ENCODE measurements at regions of chr1 and their contacts with region 1.

Region 1: DNA sequence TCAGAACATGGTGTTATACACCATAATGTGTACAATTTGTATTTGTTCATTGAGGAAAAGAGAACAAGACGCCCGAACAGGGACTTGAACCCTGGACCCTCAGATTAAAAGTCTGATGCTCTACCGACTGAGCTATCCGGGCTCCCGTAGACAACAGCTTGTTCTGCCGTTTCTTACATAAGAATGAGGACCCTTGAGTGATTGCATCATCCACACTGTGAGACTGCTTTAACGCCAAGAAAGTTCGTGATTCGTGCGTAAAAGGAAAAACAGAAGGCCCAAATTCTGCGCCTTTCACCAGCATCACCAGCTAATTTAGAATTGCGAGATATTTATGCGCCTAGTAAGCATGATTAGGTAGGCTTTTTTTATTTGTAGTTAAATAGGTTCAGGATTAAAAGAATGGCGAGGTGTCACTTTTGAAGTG is 9.2 kb upstream of the MDM4 start:
- DNase-seq: peak; percentile 100
- ATAC-seq: peak; percentile 75
- H3K4me3 ChIP-seq: peak overlapping the region; percentile 76
- H3K27ac ChIP-seq: peak overlapping the region; percentile 59
- H3K4me1 ChIP-seq: peaks cover 23% of the 10 kb centered on the region
- H3K27me3 ChIP-seq: no peaks in the 10 kb centered on the region
- CTCF ChIP-seq: no peak

Region 2: DNA sequence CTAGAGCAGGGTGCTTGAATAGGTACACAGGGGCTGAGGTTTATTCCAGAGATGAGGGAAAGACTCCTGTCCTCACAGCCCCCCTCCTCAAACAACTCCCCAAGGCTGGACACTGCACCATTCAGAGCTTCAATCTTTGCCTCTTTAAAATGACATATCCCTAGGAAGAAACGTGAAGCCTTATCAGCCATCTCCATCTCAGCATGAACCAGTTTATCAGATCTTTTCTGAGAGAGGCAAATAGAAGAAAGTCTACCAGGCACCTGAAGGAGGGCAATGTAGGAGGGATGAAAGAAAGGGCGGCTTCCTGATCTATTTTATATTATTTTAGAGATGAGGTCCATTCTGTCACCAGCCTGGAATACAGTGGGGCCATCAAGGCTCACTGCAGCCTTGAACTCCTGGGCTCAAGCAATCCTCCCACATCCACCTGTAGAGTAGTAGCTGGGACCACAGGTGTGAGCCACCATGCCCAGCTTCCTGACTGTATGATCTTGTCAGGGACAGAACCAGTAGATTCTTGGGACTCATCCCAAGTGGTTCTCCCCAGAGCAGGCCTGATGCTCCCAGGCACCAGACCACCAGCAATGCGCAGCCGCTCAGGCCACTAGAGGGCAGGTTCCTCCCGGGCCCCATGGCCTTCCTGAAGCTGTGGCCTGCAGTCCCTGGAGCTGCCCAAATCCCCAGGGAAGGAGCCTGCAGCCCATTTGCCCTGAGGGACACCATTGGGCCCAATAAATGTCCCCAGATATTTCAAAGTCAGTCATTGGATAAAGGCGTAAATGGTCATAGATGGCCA is 248.8 kb before region 1 on chr1:
- CTCF ChIA-PET with region 1: no interaction called
- POLR2A ChIA-PET with region 1: no interaction called
- intact Hi-C with region 1: loop called (anchors 5 kb)
- DNase-seq: peak; percentile 78
- ATAC-seq: peak; percentile 97
- H3K4me3 ChIP-seq: no peak overlapping the region
- H3K27ac ChIP-seq: no peak overlapping the region
- H3K4me1 ChIP-seq: no peaks in the 10 kb centered on the region
- H3K27me3 ChIP-seq: no peaks in the 10 kb centered on the region
- CTCF ChIP-seq: peak; percentile 96

Region 3: DNA sequence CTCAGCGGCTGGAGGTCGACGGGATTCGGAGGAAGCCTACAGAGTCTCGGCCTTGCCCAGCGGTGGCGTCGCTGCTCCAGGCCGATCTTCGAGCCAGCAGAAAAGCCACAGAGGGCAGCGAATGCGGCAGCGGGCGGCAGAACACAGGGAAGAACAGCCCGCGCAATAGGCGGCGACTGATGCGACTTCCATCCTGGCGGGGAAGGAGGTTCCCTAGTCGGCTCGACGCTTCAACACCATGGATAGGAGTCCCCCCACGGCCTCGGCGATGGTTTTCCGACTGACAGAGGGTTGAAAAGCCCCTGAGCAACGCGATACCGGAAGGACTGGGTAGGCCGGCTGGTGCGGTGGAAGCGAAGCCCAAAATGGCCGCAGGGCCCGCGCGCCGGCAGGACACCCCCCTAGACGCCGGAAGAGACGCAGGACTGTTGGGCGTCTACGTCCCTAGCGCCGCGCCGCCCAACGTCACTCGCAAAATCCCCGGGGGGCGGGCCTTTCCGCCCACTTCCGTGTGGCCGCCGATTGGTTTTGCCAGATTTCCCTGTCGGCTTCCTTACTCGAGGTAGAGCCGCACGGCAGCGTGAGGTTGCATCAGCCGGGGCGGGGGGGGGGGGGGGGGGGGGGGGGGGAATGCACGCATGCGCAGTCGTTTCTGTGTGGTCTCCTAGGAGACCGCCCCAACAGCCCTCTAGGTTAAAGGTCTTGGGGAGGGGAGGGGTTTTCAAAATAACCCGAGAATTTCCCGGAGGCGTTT is 95.3 kb before region 1 on chr1 and contains the start of gene PPP1R15B:
- CTCF ChIA-PET with region 1: interaction called, 6 read pairs
- POLR2A ChIA-PET with region 1: interaction called, 6 read pairs
- intact Hi-C with region 1: loop called (anchors 5 kb)
- DNase-seq: peak; percentile 100
- ATAC-seq: peak; percentile 82
- H3K4me3 ChIP-seq: peak within 1 kb of the TSS; percentile 80
- H3K27ac ChIP-seq: peak within 1 kb of the TSS; percentile 86
- H3K4me1 ChIP-seq: peaks cover 23% of the 10 kb centered on the region
- H3K27me3 ChIP-seq: no peaks in the 10 kb centered on the region
- CTCF ChIP-seq: no peak
- total RNA-seq, gene PPP1R15B: 50.7 and 57.5 TPM in 2 replicates

Region 4: GRCh38 chr1:204438628-204439027 is 68.3 kb before region 1 on chr1:
- CTCF ChIA-PET with region 1: interaction called, 8 read pairs
- POLR2A ChIA-PET with region 1: no interaction called
- intact Hi-C with region 1: loop called (anchors 2 kb)
- DNase-seq: peak; percentile 99
- ATAC-seq: peak; percentile 96
- H3K4me3 ChIP-seq: peak overlapping the region; percentile 35; the same call in 1 of the 2 replicates
- H3K27ac ChIP-seq: peak overlapping the region; percentile 73
- H3K4me1 ChIP-seq: peaks cover 43% of the 10 kb centered on the region
- H3K27me3 ChIP-seq: no peaks in the 10 kb centered on the region
- CTCF ChIP-seq: no peak

Region 5: DNA sequence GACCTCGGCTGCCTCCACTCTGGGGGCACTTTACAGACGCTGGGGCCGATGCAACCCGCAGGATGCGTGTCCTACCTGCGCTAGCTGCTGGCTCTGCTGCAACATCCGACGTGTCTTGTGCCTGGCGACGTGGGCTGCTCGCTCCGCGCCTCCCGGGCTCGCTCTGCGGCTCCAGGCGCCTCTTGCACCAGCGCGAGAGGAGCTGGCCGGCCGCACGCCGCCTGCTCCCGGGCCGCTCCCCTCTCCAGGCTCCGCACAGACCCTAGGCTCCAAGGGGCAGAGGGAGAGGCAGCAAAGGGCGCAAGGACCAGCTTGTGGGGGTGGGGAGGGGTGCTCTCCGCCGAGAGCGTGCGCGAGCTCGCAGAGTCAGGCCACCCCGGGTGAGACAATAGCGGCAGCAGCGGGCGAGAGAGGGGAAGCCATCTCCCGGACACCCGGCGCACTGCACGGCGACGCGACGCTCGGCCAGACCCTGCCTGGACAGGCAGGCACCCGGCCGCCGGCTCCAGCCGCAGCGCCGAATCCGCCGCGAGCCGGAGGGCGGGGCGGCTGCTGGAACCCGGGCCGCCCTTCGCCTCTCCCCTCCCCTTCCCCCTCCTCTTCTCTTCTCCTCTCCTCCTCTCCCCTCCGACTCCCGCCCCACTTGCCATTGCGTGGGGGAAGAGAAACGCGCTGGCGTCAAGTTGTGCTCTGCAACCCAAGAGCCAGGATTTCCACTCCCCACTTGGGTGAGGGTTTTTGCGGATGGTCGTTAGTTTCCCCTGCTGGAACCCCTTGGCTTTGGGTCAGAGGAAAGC is 12.5 kb before region 1 on chr1 and contains the start of gene PIK3C2B:
- CTCF ChIA-PET with region 1: interaction called, 12 read pairs
- POLR2A ChIA-PET with region 1: interaction called, 3 read pairs
- intact Hi-C with region 1: loop called (anchors 1 kb)
- DNase-seq: peak; percentile 94
- ATAC-seq: peak; percentile 85
- H3K4me3 ChIP-seq: peak within 1 kb of the TSS; percentile 79
- H3K27ac ChIP-seq: peak within 1 kb of the TSS; percentile 68
- H3K4me1 ChIP-seq: peaks cover 30% of the 10 kb centered on the region
- H3K27me3 ChIP-seq: no peaks in the 10 kb centered on the region
- CTCF ChIP-seq: peak; percentile 46; the same call in 1 of the 2 replicates
- total RNA-seq, gene PIK3C2B: 34.7 and 35.3 TPM in 2 replicates

Region 6: DNA sequence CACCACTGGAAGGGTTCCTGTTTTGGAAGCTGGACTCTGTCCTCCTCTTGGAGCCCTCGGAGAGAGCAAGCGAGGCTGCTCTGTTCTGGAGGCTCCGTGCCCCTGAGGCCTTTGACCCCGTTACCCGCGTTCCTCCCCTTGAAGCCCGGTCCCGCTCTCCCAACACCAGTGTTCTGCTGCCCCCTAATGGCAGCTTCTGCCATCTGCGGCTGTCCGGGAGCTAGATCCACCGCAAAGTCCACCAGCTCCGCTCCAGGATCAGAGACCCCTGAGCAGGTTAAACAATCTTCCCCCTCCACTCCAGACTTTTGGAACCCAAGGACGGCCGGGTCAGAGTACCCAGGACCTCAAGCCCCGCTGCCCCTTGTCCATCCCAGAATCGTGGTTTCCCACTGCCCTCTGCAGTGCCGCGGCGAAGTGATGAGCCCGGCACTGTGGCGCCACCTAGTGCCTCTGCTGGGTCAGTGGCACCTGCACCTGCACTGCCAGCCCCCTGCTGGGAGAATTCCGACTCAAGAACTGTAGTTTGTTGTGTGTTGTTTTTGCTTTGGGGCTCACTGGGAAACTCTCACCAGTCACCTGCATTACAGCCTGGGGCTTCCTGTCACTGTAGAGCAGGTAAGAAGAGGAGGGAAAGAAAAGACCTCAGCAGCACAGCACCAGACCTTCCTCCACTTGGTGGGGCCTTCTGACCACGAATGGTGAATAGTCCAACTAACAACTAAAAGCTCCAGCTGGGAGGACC is 300.1 kb after region 1 on chr1:
- CTCF ChIA-PET with region 1: interaction called, 21 read pairs
- POLR2A ChIA-PET with region 1: no interaction called
- intact Hi-C with region 1: loop called (anchors 2 kb)
- DNase-seq: peak; percentile 98
- ATAC-seq: peak; percentile 97
- H3K4me3 ChIP-seq: peak overlapping the region; percentile 67
- H3K27ac ChIP-seq: no peak overlapping the region
- H3K4me1 ChIP-seq: peaks cover 5% of the 10 kb centered on the region; the same call in 1 of the 2 replicates
- H3K27me3 ChIP-seq: 0 out of 2 replicates have a peak, but pooled peaks cover 3% of the 10 kb centered on the region
- CTCF ChIP-seq: peak; percentile 100